ENCODE measurements at regions of chr11 and their contacts with region 1.

Region 1: GRCh38 chr11:6362873-6363678 is 27.2 kb upstream of the SMPD1 start:
- ATAC-seq: peak; percentile 84 to 100 (median 95)
- H3K4me3 ChIP-seq: no peak overlapping the region
- H3K27ac ChIP-seq: no peak overlapping the region
- H3K4me1 ChIP-seq: no peaks in the 10 kb centered on the region

Region 2: DNA sequence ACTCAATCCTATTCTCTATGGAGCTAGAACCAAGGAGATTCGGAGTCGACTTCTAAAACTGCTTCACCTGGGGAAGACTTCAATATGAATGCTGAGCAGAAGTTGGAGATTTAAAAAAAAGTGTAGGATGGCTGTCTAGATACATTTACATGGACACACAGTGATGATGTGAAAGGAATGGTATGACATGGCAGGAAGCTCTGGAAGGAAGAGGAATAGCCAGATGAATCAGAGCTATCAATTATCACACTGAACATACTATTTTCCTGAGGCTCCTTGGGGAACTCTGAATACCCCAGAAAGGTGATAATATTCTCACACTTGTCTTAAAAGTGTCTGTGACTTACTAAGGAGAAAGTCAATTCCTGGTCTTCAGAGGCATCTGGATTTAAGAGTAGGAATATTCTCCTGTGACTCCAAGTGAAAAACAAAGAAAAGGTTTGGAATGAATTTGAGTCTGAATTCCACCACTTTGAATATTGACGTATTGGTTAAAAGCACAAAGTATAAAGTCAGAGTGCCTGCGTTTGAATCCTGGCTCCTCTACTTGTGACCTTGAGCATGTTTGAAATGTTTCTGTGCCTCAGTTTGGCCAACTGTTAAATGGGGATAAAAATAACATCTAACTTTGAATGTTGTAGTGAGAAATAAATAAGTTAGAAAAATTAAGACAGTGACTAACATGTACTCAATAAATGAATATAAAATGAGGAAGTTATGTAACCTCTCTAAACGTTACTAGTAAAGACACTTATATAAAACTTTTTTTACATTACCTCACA is 873.3 kb before region 1 on chr11:
- in situ Hi-C with region 1: no loop called
- ATAC-seq: no peak
- H3K4me3 ChIP-seq: no peak overlapping the region
- H3K27ac ChIP-seq: no peak overlapping the region
- H3K4me1 ChIP-seq: no peaks in the 10 kb centered on the region

Region 3: GRCh38 chr11:6234387-6235107 is 128.5 kb before region 1 on chr11 and contains the start of gene FHIP1B:
- in situ Hi-C with region 1: loop called in 1 of 9 experiments (anchors 25 kb)
- ATAC-seq: peak; percentile 89 to 94 (median 93)
- H3K4me3 ChIP-seq: peak within 1 kb of the TSS; percentile 62 to 80 (median 74)
- H3K27ac ChIP-seq: peak within 1 kb of the TSS; percentile 62 to 83
- H3K4me1 ChIP-seq: peaks cover 9 to 14% of the 10 kb centered on the region in 2 donors
- total RNA-seq, gene FHIP1B: 12.4 to 40.6 (median 25.9) TPM

Region 4: DNA sequence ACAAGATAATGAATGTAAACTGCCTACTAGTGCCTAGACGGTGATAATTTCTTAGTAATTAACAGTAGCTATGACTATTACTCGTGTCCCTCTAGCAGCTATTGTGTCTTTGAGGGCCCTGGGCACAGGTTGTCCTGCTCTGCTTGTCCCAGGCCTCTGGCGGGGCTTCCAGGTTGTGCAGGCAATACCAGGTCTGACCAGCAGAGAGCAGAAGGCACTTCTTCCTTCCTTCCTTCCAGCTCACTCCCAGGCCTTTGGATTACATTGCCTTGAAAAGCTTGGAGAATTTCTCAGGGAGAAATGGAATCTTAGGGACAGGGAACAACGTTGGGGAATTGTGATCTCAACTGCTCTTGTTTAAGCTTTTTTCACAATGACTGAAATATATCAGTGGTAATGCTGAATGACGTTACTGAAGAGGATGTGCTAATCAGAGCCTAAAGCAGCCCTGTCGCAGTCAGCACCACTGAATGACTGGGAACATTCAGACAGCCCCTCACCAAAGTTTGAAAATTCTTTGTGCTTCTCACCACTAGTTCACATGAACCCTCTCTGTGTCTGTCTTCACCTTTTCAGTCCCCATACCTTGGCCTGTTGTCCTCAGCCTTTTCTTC is 111.8 kb before region 1 on chr11:
- in situ Hi-C with region 1: loop called in 2 of 9 experiments (anchors 25 kb)
- ATAC-seq: peak; percentile 93 to 99 (median 96)
- H3K4me3 ChIP-seq: no peak overlapping the region
- H3K27ac ChIP-seq: no peak overlapping the region
- H3K4me1 ChIP-seq: peaks cover 0 to 2% of the 10 kb centered on the region in 2 donors

Region 5: DNA sequence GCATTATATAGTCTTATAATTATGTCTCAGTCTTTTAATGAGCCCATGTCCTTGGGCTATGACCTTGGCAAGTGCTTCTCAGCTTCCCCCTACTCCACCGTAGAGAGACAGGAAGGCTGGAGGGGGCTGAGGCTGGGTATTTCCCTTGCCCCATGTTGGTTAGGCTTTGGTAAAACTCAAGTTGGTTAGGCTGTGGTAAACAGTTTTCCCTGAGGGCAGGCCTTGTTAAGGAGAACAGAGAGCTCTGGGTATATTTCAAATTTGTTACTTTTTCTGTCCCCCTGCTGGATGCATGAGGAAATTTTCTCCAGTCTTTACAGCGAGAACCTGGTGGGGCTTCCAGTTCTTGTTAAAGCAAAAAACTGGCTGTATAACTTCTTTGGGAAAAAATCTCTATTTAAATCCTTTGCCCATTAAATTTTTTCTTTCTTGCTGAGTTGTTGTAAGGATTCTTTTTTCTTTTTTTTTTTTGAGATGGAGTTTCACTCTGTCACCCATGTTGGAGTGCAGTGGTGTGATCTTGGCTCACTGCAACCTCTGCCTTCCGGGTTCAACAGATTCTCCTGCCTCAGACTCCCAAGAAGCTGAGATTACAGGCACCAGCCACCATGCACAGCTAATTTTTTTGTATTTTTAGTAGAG is 304.8 kb after region 1 on chr11:
- in situ Hi-C with region 1: no loop called
- ATAC-seq: peak in 3 of 8 experiments; percentile 65 to 78 (median 74)
- H3K4me3 ChIP-seq: no peak overlapping the region
- H3K27ac ChIP-seq: no peak overlapping the region
- H3K4me1 ChIP-seq: no peaks in the 10 kb centered on the region

Measured in motor neuron (in vitro differentiated cells).